ENCODE measurements at regions of chr6 and their contacts with region 1.

Region 1: GRCh38 chr6:44304282-44305199 is 8.6 kb downstream of the AARS2 start:
- DNase-seq: peak; percentile 84
- H3K4me3 ChIP-seq: no peak overlapping the region
- H3K27ac ChIP-seq: no peak overlapping the region; a peak in 1 of 4 replicates
- H3K4me1 ChIP-seq: no peaks in the 10 kb centered on the region
- H3K27me3 ChIP-seq: no peaks in the 10 kb centered on the region
- CTCF ChIP-seq: peak; percentile 76
- EP300 ChIP-seq: no peak
- RAD21 ChIP-seq: peak; percentile 54

Region 2: DNA sequence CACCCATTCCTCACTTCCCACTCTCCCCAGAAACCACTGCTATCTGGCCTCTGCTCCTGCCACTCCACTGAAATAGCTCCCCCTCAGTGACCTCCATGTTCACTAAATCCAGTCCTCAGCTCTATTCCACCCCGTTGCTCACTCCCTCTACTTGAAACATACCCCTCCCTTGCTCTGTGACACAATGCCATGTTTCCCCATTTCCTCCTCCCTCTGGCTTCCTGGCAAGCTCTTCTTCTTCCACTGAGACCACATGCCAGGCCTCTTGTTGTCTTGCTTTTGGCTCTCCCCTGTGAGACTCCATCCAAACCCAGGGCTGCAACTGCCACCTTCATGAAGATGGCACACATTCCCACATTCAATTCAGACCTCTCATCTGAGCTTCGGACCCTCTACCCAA is 20.4 kb before region 1 on chr6:
- CTCF ChIA-PET with region 1: interaction called, 13 read pairs
- POLR2A ChIA-PET with region 1: no interaction called
- DNase-seq: no peak
- H3K4me3 ChIP-seq: no peak overlapping the region
- H3K27ac ChIP-seq: no peak overlapping the region
- H3K4me1 ChIP-seq: no peaks in the 10 kb centered on the region
- H3K27me3 ChIP-seq: peaks cover 5% of the 10 kb centered on the region; the same call in 1 of the 2 replicates
- CTCF ChIP-seq: no peak
- EP300 ChIP-seq: no peak
- RAD21 ChIP-seq: no peak

Region 3: GRCh38 chr6:44289726-44290260 is 14.7 kb before region 1 on chr6:
- CTCF ChIA-PET with region 1: interaction called, 16 read pairs
- POLR2A ChIA-PET with region 1: no interaction called
- DNase-seq: peak; percentile 52
- H3K4me3 ChIP-seq: no peak overlapping the region
- H3K27ac ChIP-seq: no peak overlapping the region
- H3K4me1 ChIP-seq: peaks cover 0 to 8% of the 10 kb centered on the region in 2 experiments; a peak in 1 of 4 replicates
- H3K27me3 ChIP-seq: peaks cover 10% of the 10 kb centered on the region
- CTCF ChIP-seq: no peak
- EP300 ChIP-seq: no peak
- RAD21 ChIP-seq: no peak

Region 4: GRCh38 chr6:44332585-44332984 is 28.0 kb after region 1 on chr6:
- CTCF ChIA-PET with region 1: interaction called, 47 read pairs
- POLR2A ChIA-PET with region 1: no interaction called
- DNase-seq: no peak
- H3K4me3 ChIP-seq: no peak overlapping the region
- H3K27ac ChIP-seq: no peak overlapping the region
- H3K4me1 ChIP-seq: peaks cover 0 to 6% of the 10 kb centered on the region in 2 experiments; a peak in 1 of 4 replicates
- H3K27me3 ChIP-seq: peaks cover 38% of the 10 kb centered on the region
- CTCF ChIP-seq: no peak
- EP300 ChIP-seq: no peak
- RAD21 ChIP-seq: no peak

Region 5: GRCh38 chr6:44593539-44593944 is 289.0 kb after region 1 on chr6:
- CTCF ChIA-PET with region 1: no interaction called
- POLR2A ChIA-PET with region 1: no interaction called
- DNase-seq: peak; percentile 63
- H3K4me3 ChIP-seq: peak overlapping the region in 1 of 2 experiments; percentile 10; a peak in 1 of 4 replicates
- H3K27ac ChIP-seq: no peak overlapping the region
- H3K4me1 ChIP-seq: no peaks in the 10 kb centered on the region
- H3K27me3 ChIP-seq: peaks cover 14% of the 10 kb centered on the region; the same call in 1 of the 2 replicates
- CTCF ChIP-seq: peak; percentile 73
- EP300 ChIP-seq: no peak
- RAD21 ChIP-seq: peak; percentile 67